ENCODE measurements at regions of chr3 and their contacts with region 1.

Region 1: DNA sequence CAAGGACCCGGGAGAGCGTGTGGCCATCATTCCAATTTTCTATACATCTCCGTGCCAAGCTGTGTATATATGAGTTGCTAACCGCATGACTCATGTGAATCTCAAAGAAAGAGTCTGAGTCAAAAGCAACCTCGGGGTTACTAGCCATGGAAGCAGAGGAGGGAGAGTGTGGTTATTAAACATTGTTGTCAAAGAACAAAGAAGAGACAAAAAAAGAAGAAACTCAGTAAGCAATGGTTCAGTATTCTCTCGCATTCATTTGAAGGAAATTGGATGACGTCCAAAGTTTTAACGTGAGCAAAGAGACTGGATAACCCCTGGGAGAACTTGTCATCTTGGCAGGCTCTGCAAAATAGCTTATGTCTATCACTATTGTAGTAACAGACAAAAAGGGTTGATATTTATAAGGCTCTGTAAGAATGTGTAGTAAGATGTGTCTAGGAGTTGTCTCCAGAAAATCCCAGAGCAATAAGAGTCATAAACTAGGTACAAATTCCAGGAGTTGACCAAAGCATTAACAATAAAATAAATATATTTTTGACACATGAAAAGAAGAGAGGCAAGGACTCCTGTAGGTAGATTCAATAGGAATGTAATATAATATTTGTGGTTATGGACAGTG is 52.8 kb upstream of the GRM7 start:
- DNase-seq: no peak
- H3K4me3 ChIP-seq: no peak overlapping the region
- H3K27ac ChIP-seq: no peak overlapping the region
- H3K4me1 ChIP-seq: peaks cover 0 to 9% (median 3%) of the 10 kb centered on the region in 4 donors
- H3K27me3 ChIP-seq: no peaks in the 10 kb centered on the region
- CTCF ChIP-seq: no peak
- EP300 ChIP-seq: no peak
- POLR2A ChIP-seq: no peak

Region 2: GRCh38 chr3:6204891-6205290 is 603.2 kb before region 1 on chr3:
- in situ Hi-C with region 1: loop called in 1 of 4 experiments (anchors 25 kb)
- intact Hi-C with region 1: no loop called
- DNase-seq: no peak
- H3K4me3 ChIP-seq: no peak overlapping the region
- H3K27ac ChIP-seq: no peak overlapping the region
- H3K4me1 ChIP-seq: no peaks in the 10 kb centered on the region
- H3K27me3 ChIP-seq: no peaks in the 10 kb centered on the region
- CTCF ChIP-seq: peak in 3 of 5 experiments; percentile 27 to 38 (median 36)
- EP300 ChIP-seq: no peak
- POLR2A ChIP-seq: no peak

Region 3: GRCh38 chr3:6392123-6392522 is 416.0 kb before region 1 on chr3:
- in situ Hi-C with region 1: loop called in 1 of 4 experiments (anchors 25 kb)
- intact Hi-C with region 1: no loop called
- DNase-seq: no peak
- H3K4me3 ChIP-seq: no peak overlapping the region
- H3K27ac ChIP-seq: no peak overlapping the region
- H3K4me1 ChIP-seq: no peaks in the 10 kb centered on the region
- H3K27me3 ChIP-seq: no peaks in the 10 kb centered on the region
- CTCF ChIP-seq: no peak
- EP300 ChIP-seq: no peak
- POLR2A ChIP-seq: no peak